ENCODE measurements at regions of chr1 and their contacts with region 1.

Region 1: DNA sequence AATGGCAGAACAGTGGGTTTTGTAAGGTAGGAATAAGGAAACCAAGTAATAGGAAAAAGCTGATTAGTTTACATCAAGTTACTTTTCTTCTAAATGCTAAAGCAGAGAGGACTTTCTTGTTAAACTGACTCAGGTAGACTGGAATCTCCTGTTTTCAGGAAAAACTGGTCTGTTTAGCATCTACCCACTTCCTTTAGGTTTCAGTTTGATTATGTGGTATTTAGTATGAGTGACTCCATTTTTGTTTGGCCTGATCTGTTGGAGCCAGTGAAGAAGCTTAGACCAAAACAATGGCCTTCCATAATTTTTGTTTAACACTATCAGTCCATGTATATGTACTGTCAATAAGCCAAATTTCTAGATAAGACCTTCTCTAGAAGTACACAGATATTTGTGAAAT is 88.4 kb downstream of the EPB41 start:
- DNase-seq: no peak
- ATAC-seq: no peak
- H3K4me3 ChIP-seq: no peak overlapping the region
- H3K27ac ChIP-seq: no peak overlapping the region
- H3K4me1 ChIP-seq: no peaks in the 10 kb centered on the region
- H3K27me3 ChIP-seq: no peaks in the 10 kb centered on the region
- CTCF ChIP-seq: no peak
- POLR2A ChIP-seq: no peak
- RAD21 ChIP-seq: no peak

Region 2: GRCh38 chr1:28437934-28438699 is 564.7 kb before region 1 on chr1:
- CTCF ChIA-PET with region 1: no interaction called
- POLR2A ChIA-PET with region 1: no interaction called
- dilution Hi-C with region 1: no loop called
- in situ Hi-C with region 1: no loop called
- intact Hi-C with region 1: no loop called
- DNase-seq: peak; percentile 96
- ATAC-seq: peak; percentile 98
- H3K4me3 ChIP-seq: peak overlapping the region; percentile 37; the same call in 1 of the 2 replicates
- H3K27ac ChIP-seq: no peak overlapping the region; the same call in 1 of the 2 replicates
- H3K4me1 ChIP-seq: peaks cover 2% of the 10 kb centered on the region; the same call in 1 of the 2 replicates
- H3K27me3 ChIP-seq: no peaks in the 10 kb centered on the region
- CTCF ChIP-seq: no peak
- POLR2A ChIP-seq: peak; percentile 93
- RAD21 ChIP-seq: no peak

Region 3: GRCh38 chr1:28933277-28933676 is 69.5 kb before region 1 on chr1:
- CTCF ChIA-PET with region 1: no interaction called
- POLR2A ChIA-PET with region 1: no interaction called
- dilution Hi-C with region 1: no loop called
- in situ Hi-C with region 1: no loop called
- intact Hi-C with region 1: no loop called
- DNase-seq: no peak
- ATAC-seq: no peak
- H3K4me3 ChIP-seq: no peak overlapping the region
- H3K27ac ChIP-seq: no peak overlapping the region
- H3K4me1 ChIP-seq: 0 out of 2 replicates have a peak, but pooled peaks cover 1% of the 10 kb centered on the region
- H3K27me3 ChIP-seq: no peaks in the 10 kb centered on the region
- CTCF ChIP-seq: no peak
- POLR2A ChIP-seq: no peak
- RAD21 ChIP-seq: no peak

Region 4: DNA sequence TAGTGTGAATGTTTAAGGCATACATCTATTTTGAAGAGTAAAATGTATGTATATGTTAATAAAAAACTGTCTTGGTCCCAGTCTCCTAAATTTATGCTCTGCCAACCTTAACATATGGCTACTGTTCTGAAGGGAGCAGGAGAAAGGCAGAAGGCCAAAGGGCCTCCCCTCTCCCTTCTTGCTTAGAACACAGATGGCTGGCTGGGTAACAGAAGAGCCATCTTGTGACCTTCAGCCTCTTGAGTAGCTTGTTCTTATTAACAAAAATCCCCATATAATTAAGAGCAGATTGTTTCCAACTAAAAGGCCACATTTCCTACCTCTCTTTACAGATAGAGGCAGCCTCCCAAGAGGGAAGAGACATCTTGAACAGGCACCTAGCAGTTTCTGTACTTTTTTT is 52.3 kb before region 1 on chr1:
- CTCF ChIA-PET with region 1: no interaction called
- POLR2A ChIA-PET with region 1: no interaction called
- dilution Hi-C with region 1: no loop called
- in situ Hi-C with region 1: no loop called
- intact Hi-C with region 1: loop called (anchors 5 kb)
- DNase-seq: no peak
- ATAC-seq: no peak
- H3K4me3 ChIP-seq: no peak overlapping the region
- H3K27ac ChIP-seq: no peak overlapping the region
- H3K4me1 ChIP-seq: no peaks in the 10 kb centered on the region
- H3K27me3 ChIP-seq: no peaks in the 10 kb centered on the region
- CTCF ChIP-seq: no peak
- POLR2A ChIP-seq: no peak
- RAD21 ChIP-seq: no peak